Activated CD4-positive, alpha-beta T cell treated with anti-CD3 and anti-CD28 coated beads for 36 hours (primary cell): ENCODE measurements at regions of chr4 and their contacts with region 1.

Region 1: GRCh38 chr4:108166441-108167315 is 2.1 kb downstream of the LEF1 start:
- DNase-seq: peak; percentile 86
- ATAC-seq: peak; percentile 35
- H3K4me3 Mint-ChIP-seq: peak overlapping the region; percentile 85
- H3K27ac Mint-ChIP-seq: peak overlapping the region; percentile 96
- H3K4me1 Mint-ChIP-seq: peaks cover 39% of the 10 kb centered on the region
- H3K27me3 Mint-ChIP-seq: peaks cover 12% of the 10 kb centered on the region

Region 2: GRCh38 chr4:108141213-108141950 is 25.3 kb before region 1 on chr4:
- CTCF ChIA-PET with region 1: interaction called, 4 read pairs
- POLR2A ChIA-PET with region 1: interaction called, 4 read pairs
- intact Hi-C with region 1: loop called (anchors 2 kb)
- DNase-seq: peak; percentile 70
- ATAC-seq: peak; percentile 53
- H3K4me3 Mint-ChIP-seq: peak overlapping the region; percentile 75
- H3K27ac Mint-ChIP-seq: peak overlapping the region; percentile 100
- H3K4me1 Mint-ChIP-seq: peaks cover 89% of the 10 kb centered on the region
- H3K27me3 Mint-ChIP-seq: no peaks in the 10 kb centered on the region

Region 3: DNA sequence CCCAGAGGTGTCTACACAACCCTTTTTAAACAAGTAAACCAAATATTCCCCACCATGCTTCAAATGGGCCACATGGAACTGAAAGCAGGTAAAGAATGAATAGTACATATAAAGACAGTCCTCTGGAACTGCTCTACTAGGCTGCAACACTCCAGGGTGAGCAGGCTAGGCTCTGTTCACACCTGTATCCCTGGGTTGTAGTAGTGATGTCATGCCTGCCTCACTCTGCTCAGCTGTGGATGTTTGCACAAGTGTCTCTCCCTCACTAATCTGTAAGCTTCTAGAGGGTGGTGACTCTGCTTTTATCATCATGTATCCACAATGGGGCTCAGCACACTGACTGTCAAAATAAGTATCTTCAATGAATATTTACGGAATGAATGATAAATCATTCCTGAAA is 18.4 kb before region 1 on chr4:
- CTCF ChIA-PET with region 1: interaction called, 4 read pairs
- POLR2A ChIA-PET with region 1: interaction called, 4 read pairs
- intact Hi-C with region 1: loop called (anchors 1 to 2 kb)
- DNase-seq: peak; percentile 69
- ATAC-seq: peak; percentile 66
- H3K4me3 Mint-ChIP-seq: peak overlapping the region; percentile 37
- H3K27ac Mint-ChIP-seq: peak overlapping the region; percentile 83
- H3K4me1 Mint-ChIP-seq: peaks cover 89% of the 10 kb centered on the region
- H3K27me3 Mint-ChIP-seq: no peaks in the 10 kb centered on the region